ENCODE measurements at regions of chr12 and their contacts with region 1.

Region 1: GRCh38 chr12:25997201-25997963 is 38.9 kb downstream of the RASSF8 start:
- DNase-seq: no peak
- H3K4me3 ChIP-seq: no peak overlapping the region
- H3K27ac ChIP-seq: peak overlapping the region; percentile 47 to 81
- H3K4me1 ChIP-seq: peaks cover 6 to 39% of the 10 kb centered on the region in 2 donors
- H3K27me3 ChIP-seq: no peaks in the 10 kb centered on the region
- CTCF ChIP-seq: no peak

Region 2: GRCh38 chr12:26011099-26011498 is 13.7 kb after region 1 on chr12:
- intact Hi-C with region 1: loop called (anchors 2 kb)
- DNase-seq: no peak
- H3K4me3 ChIP-seq: no peak overlapping the region
- H3K27ac ChIP-seq: peak overlapping the region; percentile 82 to 87
- H3K4me1 ChIP-seq: peaks cover 3 to 24% of the 10 kb centered on the region in 2 donors
- H3K27me3 ChIP-seq: no peaks in the 10 kb centered on the region
- CTCF ChIP-seq: no peak

Measured in ascending aorta (tissue), 2 donors.